AG04450 (cell line): ENCODE measurements at regions of chr10 and their contacts with region 1.

Region 1: DNA sequence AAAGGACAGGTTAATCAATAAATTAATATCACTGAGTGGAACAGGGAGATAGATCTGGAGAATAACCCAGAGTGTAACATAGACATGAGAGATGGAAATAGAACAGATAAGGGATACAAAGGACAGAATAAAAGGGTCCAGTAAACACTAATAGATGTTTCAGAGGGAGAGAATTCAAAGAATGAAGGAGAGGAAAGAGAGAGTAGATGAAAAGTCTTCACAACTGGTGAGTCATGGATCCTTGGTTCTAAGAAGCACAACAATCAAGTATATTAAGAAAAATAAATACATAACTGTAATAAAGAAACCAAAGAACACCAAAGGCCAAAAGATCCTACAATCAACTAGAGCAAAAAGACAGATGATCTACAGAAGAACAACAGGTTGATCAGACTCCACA is 66.3 kb downstream of the BEND7 start:
- DNase-seq: no peak
- H3K4me3 ChIP-seq: no peak overlapping the region
- H3K27ac ChIP-seq: no peak overlapping the region
- H3K27me3 ChIP-seq: peaks cover 6% of the 10 kb centered on the region
- CTCF ChIP-seq: no peak

Region 2: DNA sequence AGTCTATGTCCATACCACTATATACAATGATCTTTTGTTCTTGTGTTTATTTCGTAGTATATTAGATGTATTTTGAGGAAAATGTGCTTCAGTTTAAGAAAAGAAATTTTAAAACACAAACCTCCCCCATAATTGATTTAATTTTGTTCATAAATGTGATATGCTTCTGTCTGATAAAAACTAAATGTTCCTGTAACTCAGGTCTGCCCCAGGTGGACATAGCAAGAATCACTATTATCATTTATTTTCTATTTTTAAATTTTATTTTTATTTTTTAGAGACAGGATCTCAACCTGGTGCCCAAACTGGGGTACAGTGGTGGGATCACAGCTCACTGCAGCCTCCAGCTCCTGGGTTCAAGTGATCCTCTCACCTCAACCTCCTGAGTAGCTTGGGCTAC is 23.1 kb after region 1 on chr10:
- CTCF ChIA-PET with region 1: no interaction called
- POLR2A ChIA-PET with region 1: no interaction called
- DNase-seq: no peak
- H3K4me3 ChIP-seq: no peak overlapping the region
- H3K27ac ChIP-seq: no peak overlapping the region
- H3K27me3 ChIP-seq: no peaks in the 10 kb centered on the region
- CTCF ChIP-seq: peak; percentile 55

Region 3: GRCh38 chr10:13924040-13924725 is 461.6 kb after region 1 on chr10:
- CTCF ChIA-PET with region 1: interaction called, 10 read pairs
- POLR2A ChIA-PET with region 1: no interaction called
- DNase-seq: peak; percentile 86
- H3K4me3 ChIP-seq: no peak overlapping the region
- H3K27ac ChIP-seq: peak overlapping the region; percentile 95
- H3K27me3 ChIP-seq: no peaks in the 10 kb centered on the region
- CTCF ChIP-seq: no peak